Activated CD4-positive, alpha-beta memory T cell treated with anti-CD3 and anti-CD28 coated beads for 36 hours (primary cell): ENCODE measurements at regions of chr7 and their contacts with region 1.

Region 1: GRCh38 chr7:604001-604883 is 84.6 kb upstream of the PDGFA start:
- DNase-seq: peak; percentile 98
- H3K4me3 Mint-ChIP-seq: peak overlapping the region; percentile 93
- H3K27ac Mint-ChIP-seq: peak overlapping the region; percentile 100
- H3K4me1 Mint-ChIP-seq: peaks cover 61% of the 10 kb centered on the region
- H3K27me3 Mint-ChIP-seq: no peaks in the 10 kb centered on the region

Region 2: GRCh38 chr7:518630-519483 is 85.4 kb before region 1 on chr7:
- CTCF ChIA-PET with region 1: no interaction called
- POLR2A ChIA-PET with region 1: interaction called, 4 read pairs
- intact Hi-C with region 1: loop called (anchors 5 kb)
- DNase-seq: peak; percentile 66
- H3K4me3 Mint-ChIP-seq: peak overlapping the region; percentile 79
- H3K27ac Mint-ChIP-seq: no peak overlapping the region
- H3K4me1 Mint-ChIP-seq: peaks cover 19% of the 10 kb centered on the region
- H3K27me3 Mint-ChIP-seq: peaks cover 39% of the 10 kb centered on the region

Region 3: DNA sequence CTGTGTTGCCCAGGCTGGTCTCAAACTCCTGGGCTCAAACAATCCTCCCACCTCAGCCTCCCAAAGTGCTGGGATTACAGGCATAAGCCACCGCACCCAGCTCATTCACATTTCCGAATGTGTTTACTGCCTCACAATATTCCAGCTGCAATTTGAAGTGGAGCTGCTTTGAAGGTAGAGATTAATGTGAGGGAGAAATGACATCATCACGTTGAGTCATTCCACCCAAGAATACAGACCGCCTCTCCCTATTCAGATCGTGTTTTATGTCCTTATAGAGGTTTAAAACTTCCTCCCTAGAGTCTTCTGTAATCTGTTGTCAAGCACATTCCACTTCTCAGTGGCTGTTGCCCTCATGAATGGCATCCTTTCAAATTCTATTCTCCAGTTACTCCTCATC is 15.8 kb after region 1 on chr7:
- CTCF ChIA-PET with region 1: interaction called, 5 read pairs
- POLR2A ChIA-PET with region 1: interaction called, 31 read pairs
- intact Hi-C with region 1: loop called (anchors 1 kb)
- DNase-seq: peak; percentile 29
- H3K4me3 Mint-ChIP-seq: no peak overlapping the region
- H3K27ac Mint-ChIP-seq: peak overlapping the region; percentile 97
- H3K4me1 Mint-ChIP-seq: peaks cover 43% of the 10 kb centered on the region
- H3K27me3 Mint-ChIP-seq: no peaks in the 10 kb centered on the region

Region 4: DNA sequence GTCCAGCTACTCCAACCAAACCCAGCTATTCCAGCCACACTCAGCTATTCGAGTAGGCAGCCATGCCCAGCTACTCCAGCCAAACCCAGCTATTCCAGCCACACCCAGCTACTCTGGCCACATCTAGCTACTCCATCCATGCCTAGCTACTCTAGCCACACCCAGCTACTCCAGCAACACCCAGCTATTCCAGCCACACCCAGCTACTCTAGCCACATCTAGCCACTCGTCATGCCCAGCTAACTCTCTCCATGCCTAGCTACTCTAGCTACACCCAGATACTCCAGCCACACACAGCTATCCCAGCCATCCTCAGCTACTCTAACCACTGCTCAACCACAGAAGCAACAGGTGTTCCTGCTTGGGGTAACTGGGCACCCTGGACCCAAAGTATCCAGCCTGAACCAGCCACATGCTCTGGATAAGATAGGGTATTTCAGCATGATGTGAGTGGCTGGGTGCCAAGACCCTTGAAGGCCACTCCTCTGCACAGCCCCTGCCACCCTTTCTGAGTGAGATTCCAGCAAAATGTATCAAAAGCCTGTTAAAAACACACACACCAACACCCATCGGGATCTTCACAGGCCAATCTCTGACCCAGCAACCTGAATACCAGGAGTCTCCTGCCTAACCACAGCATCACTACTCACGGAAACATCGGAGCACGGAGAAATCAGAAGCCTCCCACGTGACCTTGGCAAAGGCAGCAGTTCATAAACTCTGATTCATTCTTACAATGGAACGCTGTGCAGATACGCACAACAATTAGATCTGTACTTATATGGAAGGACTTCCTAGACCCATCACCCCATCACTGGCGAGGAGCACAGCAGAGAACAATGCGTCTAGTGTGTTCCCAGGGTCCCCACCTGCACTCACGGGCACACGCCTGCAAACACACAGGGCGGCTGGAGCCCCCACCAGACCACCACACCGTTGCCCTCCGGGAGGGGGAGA is 70.5 kb after region 1 on chr7:
- CTCF ChIA-PET with region 1: no interaction called
- POLR2A ChIA-PET with region 1: no interaction called
- intact Hi-C with region 1: no loop called
- DNase-seq: no peak
- H3K4me3 Mint-ChIP-seq: no peak overlapping the region
- H3K27ac Mint-ChIP-seq: no peak overlapping the region
- H3K4me1 Mint-ChIP-seq: no peaks in the 10 kb centered on the region
- H3K27me3 Mint-ChIP-seq: no peaks in the 10 kb centered on the region

Region 5: GRCh38 chr7:816300-816750 is 212.1 kb after region 1 on chr7:
- CTCF ChIA-PET with region 1: interaction called, 3 read pairs
- POLR2A ChIA-PET with region 1: no interaction called
- intact Hi-C with region 1: loop called (anchors 1 kb)
- DNase-seq: peak; percentile 98
- H3K4me3 Mint-ChIP-seq: peak overlapping the region; percentile 71
- H3K27ac Mint-ChIP-seq: no peak overlapping the region
- H3K4me1 Mint-ChIP-seq: peaks cover 57% of the 10 kb centered on the region
- H3K27me3 Mint-ChIP-seq: peaks cover 9% of the 10 kb centered on the region

Region 6: GRCh38 chr7:923108-924041 is 319.1 kb after region 1 on chr7:
- CTCF ChIA-PET with region 1: no interaction called
- POLR2A ChIA-PET with region 1: interaction called, 3 read pairs
- intact Hi-C with region 1: loop called (anchors 5 kb)
- DNase-seq: peak; percentile 98
- H3K4me3 Mint-ChIP-seq: peak overlapping the region; percentile 71
- H3K27ac Mint-ChIP-seq: peak overlapping the region; percentile 92
- H3K4me1 Mint-ChIP-seq: peaks cover 39% of the 10 kb centered on the region
- H3K27me3 Mint-ChIP-seq: no peaks in the 10 kb centered on the region

Region 7: DNA sequence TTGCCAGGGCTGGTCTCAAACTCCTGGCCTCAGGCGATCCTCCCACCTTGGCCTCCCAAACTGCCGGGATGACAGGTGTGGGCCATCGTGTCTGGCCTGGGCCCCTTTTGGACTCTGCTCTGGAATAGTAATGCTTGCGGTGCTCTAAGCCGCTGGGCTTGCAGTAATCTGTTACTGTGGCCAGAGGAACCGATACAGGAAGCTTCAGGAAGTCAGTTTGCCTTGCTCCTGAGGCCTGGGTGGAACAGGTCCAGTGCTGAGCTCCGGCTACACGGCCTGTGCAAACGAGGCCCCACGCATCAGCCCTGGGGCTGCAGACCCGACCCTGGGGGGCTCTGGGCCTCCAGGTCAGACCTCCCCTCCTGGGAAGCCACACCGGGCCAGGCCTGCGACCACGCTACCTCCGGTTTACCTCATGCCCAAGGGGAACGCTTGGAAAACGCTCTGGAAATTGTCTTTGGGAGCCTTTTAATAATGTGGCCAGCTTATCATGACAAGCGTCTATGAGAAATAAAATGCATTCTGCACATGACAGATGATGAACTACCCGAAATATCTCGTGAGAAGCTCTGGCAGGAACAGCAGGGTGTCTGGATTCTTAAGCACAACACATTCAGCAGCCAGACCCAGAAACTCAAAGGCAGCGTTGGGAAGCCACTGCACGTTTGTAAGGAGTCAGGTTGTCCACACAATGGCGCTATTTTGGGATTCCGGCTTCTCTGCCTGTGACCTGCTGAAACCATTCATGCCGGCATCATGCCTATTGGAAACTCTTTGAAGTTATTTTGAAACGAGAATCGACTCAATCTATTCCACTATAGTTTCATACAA is 360.4 kb after region 1 on chr7:
- CTCF ChIA-PET with region 1: no interaction called
- POLR2A ChIA-PET with region 1: no interaction called
- intact Hi-C with region 1: no loop called
- DNase-seq: no peak
- H3K4me3 Mint-ChIP-seq: no peak overlapping the region
- H3K27ac Mint-ChIP-seq: no peak overlapping the region
- H3K4me1 Mint-ChIP-seq: peaks cover 14% of the 10 kb centered on the region
- H3K27me3 Mint-ChIP-seq: peaks cover 4% of the 10 kb centered on the region